Breast epithelium (tissue), 4 donors: ENCODE measurements at regions of chr19 and their contacts with region 1.

Region 1: GRCh38 chr19:3338541-3339181 is 27.7 kb upstream of the NFIC start:
- DNase-seq: peak; percentile 77 to 80
- H3K4me3 ChIP-seq: no peak overlapping the region
- H3K27ac ChIP-seq: peak overlapping the region; percentile 90 to 98
- H3K4me1 ChIP-seq: peaks cover 25 to 32% of the 10 kb centered on the region in 2 donors
- H3K27me3 ChIP-seq: no peaks in the 10 kb centered on the region
- CTCF ChIP-seq: no peak
- POLR2A ChIP-seq: no peak

Region 2: GRCh38 chr19:3431760-3432397 is 93.2 kb after region 1 on chr19:
- intact Hi-C with region 1: loop called (anchors 1 kb)
- DNase-seq: no peak
- H3K4me3 ChIP-seq: no peak overlapping the region
- H3K27ac ChIP-seq: peak overlapping the region; percentile 86 to 94
- H3K4me1 ChIP-seq: peaks cover 6 to 28% of the 10 kb centered on the region in 2 donors
- H3K27me3 ChIP-seq: no peaks in the 10 kb centered on the region
- CTCF ChIP-seq: no peak
- POLR2A ChIP-seq: no peak